MCF 10A (cell line): ENCODE measurements at regions of chr2 and their contacts with region 1.

Region 1: GRCh38 chr2:178478439-178479274 is at the start of gene FKBP7:
- DNase-seq: peak; percentile 82
- H3K4me3 Mint-ChIP-seq: peak within 1 kb of the TSS; percentile 96
- H3K27ac Mint-ChIP-seq: peak within 1 kb of the TSS; percentile 99
- H3K4me1 Mint-ChIP-seq: peaks cover 19% of the 10 kb centered on the region
- H3K27me3 Mint-ChIP-seq: no peaks in the 10 kb centered on the region
- CTCF ChIP-seq: peak; percentile 71
- total RNA-seq, gene FKBP7: 5.8 and 8.4 TPM in 2 replicates

Region 2: DNA sequence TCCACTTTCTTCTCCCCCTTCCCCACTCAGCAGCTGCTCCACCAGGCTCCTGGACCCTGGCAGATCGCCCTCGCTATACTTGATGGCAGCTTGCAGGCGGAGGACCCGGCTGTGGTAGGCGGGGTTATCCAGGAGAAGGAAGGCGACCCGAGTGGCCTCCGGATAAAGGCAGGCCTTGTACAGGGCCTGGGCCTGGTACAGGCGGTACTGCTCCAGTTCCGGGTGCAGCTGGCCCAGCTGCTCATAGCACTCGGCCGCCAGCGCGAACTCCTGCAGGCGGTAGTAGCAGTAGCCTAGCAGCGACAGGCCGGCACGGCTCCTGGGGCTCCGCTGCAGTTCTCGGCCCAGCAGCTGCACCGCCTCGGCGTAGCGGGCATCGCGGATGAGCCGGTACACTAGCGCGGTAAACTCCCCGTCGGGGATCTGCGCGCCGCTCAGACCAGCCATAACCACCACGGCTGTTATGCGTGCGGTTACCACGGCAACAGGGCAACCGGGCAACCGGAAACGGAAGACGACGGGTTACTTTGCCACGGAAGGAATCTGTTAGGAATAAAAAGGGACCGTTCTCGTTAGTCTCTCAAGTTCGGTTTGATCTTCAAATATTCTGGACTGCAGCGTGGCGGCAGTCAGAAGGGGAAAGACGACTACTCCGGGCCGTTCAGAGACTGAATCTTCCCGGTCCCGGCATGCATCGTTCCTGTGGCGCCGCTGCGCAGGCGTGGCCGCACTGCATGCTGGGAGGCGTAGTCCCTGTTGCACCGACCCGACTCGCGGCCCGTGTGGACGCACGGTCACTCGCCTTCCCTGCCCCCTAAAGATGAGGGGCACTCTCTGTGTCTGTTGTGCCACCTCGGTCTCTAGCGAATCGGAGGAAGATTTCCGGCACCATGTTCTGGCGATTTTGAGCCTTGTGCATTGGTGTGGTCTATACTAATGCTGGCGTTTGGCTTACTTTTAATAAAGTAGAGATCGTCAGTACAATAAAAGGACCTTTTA is 860.1 kb before region 1 on chr2:
- CTCF ChIA-PET with region 1: no interaction called
- POLR2A ChIA-PET with region 1: no interaction called
- intact Hi-C with region 1: no loop called
- DNase-seq: peak; percentile 85
- H3K4me3 Mint-ChIP-seq: peak overlapping the region; percentile 91
- H3K27ac Mint-ChIP-seq: peak overlapping the region; percentile 100
- H3K4me1 Mint-ChIP-seq: peaks cover 6% of the 10 kb centered on the region
- H3K27me3 Mint-ChIP-seq: no peaks in the 10 kb centered on the region
- CTCF ChIP-seq: no peak

Region 3: GRCh38 chr2:178450774-178451525 is 27.7 kb before region 1 on chr2 and contains the starts of genes PJVK and PRKRA:
- CTCF ChIA-PET with region 1: no interaction called
- POLR2A ChIA-PET with region 1: interaction called, 76 read pairs
- intact Hi-C with region 1: loop called (anchors 1 kb)
- DNase-seq: peak; percentile 95
- H3K4me3 Mint-ChIP-seq: peak within 1 kb of the TSS; percentile 88
- H3K27ac Mint-ChIP-seq: peak within 1 kb of the TSS; percentile 100
- H3K4me1 Mint-ChIP-seq: peaks cover 11% of the 10 kb centered on the region
- H3K27me3 Mint-ChIP-seq: no peaks in the 10 kb centered on the region
- CTCF ChIP-seq: no peak
- total RNA-seq, gene PJVK: 7.4 and 10.4 TPM in 2 replicates
- total RNA-seq, gene PRKRA: 51.4 and 58.9 TPM in 2 replicates